ENCODE measurements at regions of chr11 and their contacts with region 1.

Region 1: DNA sequence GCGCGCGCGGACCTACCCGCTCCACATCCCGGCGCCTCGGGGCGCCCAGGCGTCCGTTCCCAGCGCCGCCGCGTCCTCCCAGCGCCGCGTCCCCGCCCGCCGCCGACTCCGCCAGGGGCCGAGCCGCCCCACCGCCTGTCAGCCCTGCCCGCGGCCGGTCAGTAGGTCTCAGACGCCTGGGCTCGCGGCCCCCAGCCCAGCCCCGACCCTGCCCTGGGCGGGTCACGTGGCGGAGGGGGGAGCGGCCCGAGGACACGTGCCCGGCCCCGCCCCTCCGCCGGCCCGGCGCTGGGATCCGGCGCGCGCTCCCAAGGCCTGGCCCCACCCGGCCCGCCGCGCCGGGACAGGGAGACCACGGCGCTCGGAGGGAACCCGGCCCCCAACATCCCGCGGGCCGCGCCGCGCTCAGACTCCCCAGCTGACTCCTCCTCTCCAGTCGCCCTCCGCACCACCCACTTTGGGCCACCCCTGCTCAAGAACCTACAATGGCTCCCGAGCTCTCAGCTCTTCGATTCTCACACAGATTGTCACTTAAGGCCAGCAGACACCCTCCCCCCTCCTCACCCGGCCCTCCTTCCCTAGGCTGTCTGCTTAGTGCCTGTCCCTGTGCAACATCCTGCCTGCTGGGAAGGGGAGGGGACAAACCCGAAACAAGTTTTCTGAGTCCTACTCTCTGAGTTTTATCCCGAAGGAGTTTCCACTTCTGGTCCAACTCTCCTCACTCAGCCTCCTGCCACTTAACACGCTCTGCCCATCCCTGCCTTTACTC is at the start of gene RAB3IL1:
- DNase-seq: peak; percentile 63
- H3K4me3 Mint-ChIP-seq: peak within 1 kb of the TSS; percentile 78
- H3K27ac Mint-ChIP-seq: no peak within 1 kb of the TSS
- H3K4me1 Mint-ChIP-seq: peaks cover 10% of the 10 kb centered on the region
- H3K27me3 Mint-ChIP-seq: peaks cover 44% of the 10 kb centered on the region
- total RNA-seq, gene RAB3IL1: 0.52 to 0.74 TPM

Region 2: DNA sequence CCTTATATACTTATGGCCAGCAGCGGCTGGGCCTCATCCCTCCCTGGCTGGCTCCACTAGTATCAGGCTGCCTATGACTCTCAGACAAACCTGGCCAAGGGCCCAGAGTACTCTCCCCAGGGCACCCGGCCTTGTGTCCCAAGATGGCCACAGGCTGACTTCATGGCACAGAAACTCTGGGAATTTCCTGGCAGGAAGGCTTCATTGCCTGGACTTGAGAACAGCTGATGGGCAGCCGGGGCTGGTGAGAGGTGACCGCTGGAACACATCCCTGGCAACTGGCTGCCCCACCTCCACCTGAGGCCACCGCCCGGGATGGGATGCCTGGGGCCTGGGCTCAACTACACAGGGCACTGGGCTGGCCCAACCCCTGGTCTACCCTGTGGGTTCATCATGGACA is 29.5 kb before region 1 on chr11:
- CTCF ChIA-PET with region 1: no interaction called
- intact Hi-C with region 1: no loop called
- DNase-seq: no peak
- H3K4me3 Mint-ChIP-seq: no peak overlapping the region
- H3K27ac Mint-ChIP-seq: no peak overlapping the region
- H3K4me1 Mint-ChIP-seq: peaks cover 6% of the 10 kb centered on the region
- H3K27me3 Mint-ChIP-seq: no peaks in the 10 kb centered on the region

Region 3: GRCh38 chr11:61928606-61929005 is 11.1 kb after region 1 on chr11:
- CTCF ChIA-PET with region 1: interaction called, 10 read pairs
- intact Hi-C with region 1: no loop called
- DNase-seq: no peak
- H3K4me3 Mint-ChIP-seq: no peak overlapping the region
- H3K27ac Mint-ChIP-seq: no peak overlapping the region
- H3K4me1 Mint-ChIP-seq: no peaks in the 10 kb centered on the region
- H3K27me3 Mint-ChIP-seq: peaks cover 10% of the 10 kb centered on the region

Region 4: DNA sequence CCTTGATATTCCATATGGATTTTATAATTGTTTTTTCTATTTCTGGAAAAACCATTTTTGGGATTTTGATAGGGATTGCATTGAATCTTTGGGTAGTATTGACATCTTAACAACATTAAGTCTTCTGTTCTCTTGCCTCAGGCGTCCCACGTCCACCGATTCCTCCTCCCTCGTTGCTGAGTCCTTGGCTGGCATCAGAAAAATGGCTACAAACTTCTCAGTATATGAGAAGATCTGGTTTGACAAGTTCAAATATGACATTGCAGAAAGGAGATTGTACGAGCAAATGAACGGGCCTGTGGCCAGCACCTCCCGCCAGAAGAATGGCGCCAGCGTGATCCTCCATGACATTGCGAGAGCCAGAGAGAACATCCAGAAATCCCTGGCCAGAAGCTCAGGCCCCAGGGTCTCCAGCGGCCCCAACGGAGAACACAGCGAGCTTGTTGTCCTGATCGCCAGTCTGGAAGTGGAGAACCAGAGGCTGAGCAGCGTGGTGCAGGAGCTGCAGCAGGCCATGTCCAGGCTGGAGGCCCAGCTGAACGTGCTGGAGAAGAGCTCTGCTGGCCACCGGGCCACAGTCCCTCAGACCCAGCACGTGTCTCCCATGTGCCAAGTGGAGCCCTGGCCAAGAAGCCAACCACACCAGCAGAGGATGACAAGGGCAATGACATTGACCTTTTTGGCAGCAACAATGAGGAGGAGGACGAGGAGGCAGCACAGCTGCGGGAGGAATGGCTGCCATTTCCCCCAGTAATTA is 251.7 kb after region 1 on chr11:
- CTCF ChIA-PET with region 1: no interaction called
- intact Hi-C with region 1: no loop called
- DNase-seq: no peak
- H3K4me3 Mint-ChIP-seq: no peak overlapping the region
- H3K27ac Mint-ChIP-seq: no peak overlapping the region
- H3K4me1 Mint-ChIP-seq: peaks cover 4% of the 10 kb centered on the region
- H3K27me3 Mint-ChIP-seq: peaks cover 19% of the 10 kb centered on the region